Ascending aorta (tissue), 2 donors: ENCODE measurements at regions of chr3 and their contacts with region 1.

Region 1: DNA sequence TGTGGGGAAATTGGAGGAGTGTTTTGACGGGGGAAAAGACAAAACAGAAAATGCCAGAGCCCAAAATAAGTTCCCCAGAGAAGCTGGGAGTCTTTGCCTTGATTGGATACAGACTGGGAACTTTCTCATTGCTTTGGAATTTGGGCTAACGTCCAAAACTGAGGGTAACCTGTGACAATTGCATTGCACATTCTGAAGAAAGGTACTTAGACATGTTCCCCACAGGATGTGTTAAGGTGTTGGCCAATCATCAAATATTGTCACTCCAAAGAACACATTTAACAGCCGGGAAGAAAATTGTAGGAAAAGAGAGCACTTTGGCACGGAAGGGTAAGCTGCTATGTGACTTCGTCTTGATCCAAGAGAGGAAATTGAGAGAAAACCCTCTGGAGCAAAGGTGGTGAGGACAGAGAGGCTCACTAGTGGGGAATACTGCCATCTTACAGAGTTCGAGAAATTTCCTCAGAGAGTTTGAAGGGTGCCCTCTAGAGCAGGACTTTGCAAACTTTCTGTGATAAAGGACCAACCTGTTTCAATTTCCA is 619.5 kb upstream of the TBL1XR1 start:
- DNase-seq: peak in 1 of 2 donors; percentile 73
- H3K4me3 ChIP-seq: no peak overlapping the region
- H3K27ac ChIP-seq: peak overlapping the region; percentile 82 to 84
- H3K4me1 ChIP-seq: peaks cover 0 to 29% of the 10 kb centered on the region in 2 donors
- H3K27me3 ChIP-seq: no peaks in the 10 kb centered on the region
- CTCF ChIP-seq: peak in 2 of 3 experiments; percentile 17 to 35

Region 2: GRCh38 chr3:177478170-177478860 is 338.4 kb before region 1 on chr3:
- intact Hi-C with region 1: loop called (anchors 5 kb)
- DNase-seq: peak in 1 of 2 donors; percentile 79
- H3K4me3 ChIP-seq: no peak overlapping the region
- H3K27ac ChIP-seq: peak overlapping the region; percentile 69 to 75
- H3K4me1 ChIP-seq: peaks cover 0 to 25% of the 10 kb centered on the region in 2 donors
- H3K27me3 ChIP-seq: no peaks in the 10 kb centered on the region
- CTCF ChIP-seq: no peak